ENCODE measurements at regions of chr3 and their contacts with region 1.

Region 1: DNA sequence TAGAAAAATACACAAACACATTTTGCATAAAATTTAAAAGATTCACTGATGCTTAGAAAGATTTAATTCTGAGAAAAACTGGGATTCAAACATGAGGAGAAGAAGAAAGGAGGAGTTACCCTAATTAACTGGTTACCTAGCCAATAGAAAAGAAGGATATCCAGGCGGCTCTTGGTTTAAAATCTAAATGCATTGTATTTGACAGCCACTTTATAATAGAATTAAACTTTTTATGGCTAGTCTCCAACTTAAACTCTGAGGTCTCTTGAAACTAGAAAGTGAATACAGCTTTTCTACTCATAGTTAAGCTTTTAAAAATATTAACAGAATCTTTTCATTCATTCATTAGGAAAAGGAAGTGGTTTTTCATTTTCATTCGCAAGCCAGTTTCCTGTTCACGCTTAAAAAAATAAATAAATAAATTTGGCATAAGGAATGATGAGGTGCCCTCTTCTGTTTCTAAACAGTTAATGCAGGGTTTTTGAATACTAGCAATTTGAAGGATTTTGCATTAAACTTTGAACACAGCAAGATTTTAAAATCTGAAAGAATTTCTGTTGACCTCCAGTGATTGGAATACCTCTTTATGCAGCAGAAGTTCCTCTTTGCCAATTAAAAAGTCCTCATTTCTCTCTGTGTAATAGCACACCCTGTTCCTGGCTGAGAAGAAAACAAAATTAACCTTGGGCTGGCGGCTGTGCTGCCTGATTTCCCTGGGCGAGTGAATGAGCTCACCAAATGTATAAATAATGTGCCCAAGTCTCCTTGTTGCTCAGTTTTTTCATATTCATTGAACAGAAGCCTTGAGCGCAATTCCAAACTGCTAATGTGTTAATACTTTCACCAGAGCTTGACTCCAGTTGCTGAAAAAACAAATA is 105.1 kb downstream of the ZMAT3 start:
- DNase-seq: no peak
- ATAC-seq: no peak
- H3K4me3 ChIP-seq: no peak overlapping the region
- H3K4me1 ChIP-seq: peaks cover 6% of the 10 kb centered on the region
- CTCF ChIP-seq: no peak

Region 2: GRCh38 chr3:178436773-178437172 is 529.8 kb before region 1 on chr3:
- intact Hi-C with region 1: loop called (anchors 10 kb)
- DNase-seq: no peak
- ATAC-seq: no peak
- H3K4me3 ChIP-seq: no peak overlapping the region
- H3K4me1 ChIP-seq: no peaks in the 10 kb centered on the region
- CTCF ChIP-seq: no peak

Region 3: DNA sequence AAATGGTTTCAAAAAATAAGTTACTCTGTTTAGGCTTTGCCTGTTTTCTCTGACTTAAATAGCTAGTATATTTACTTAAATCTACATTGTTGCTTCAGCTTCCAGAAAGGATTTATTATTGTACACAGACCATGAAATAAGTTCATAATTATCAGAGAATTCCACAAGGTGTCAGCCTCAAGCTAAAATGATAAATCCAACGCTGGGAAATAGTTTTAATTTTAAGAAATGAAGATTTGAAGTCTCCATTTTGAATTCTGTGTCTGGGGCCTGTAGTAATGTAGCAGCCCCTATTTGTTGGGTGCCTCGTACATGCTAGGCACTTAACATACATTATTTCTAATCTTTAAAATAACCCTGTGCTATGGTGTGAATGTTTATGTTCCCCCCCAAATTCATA is 522.9 kb before region 1 on chr3:
- intact Hi-C with region 1: loop called (anchors 10 kb)
- DNase-seq: no peak
- ATAC-seq: no peak
- H3K4me3 ChIP-seq: no peak overlapping the region
- H3K4me1 ChIP-seq: no peaks in the 10 kb centered on the region
- CTCF ChIP-seq: no peak

Region 4: DNA sequence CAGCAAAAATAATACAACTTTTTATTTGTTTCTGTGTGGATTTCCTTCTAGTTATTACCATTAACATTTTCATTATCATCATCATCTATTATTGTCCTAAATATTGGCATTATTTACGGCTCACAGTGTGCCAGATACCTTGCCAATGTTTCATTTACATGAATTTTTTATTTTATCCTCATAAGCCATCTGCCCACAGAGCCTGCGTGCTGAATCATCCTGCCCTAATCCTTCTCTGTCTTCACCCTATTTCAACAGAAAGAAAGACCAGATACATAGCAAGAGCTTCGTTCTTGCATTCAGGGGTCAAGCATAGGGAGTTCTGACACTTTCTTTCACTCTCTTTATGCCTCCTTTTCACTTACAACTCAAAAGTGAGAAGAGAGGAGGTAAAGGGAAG is 348.3 kb before region 1 on chr3:
- intact Hi-C with region 1: no loop called
- DNase-seq: no peak
- ATAC-seq: no peak
- H3K4me3 ChIP-seq: no peak overlapping the region
- H3K4me1 ChIP-seq: no peaks in the 10 kb centered on the region
- CTCF ChIP-seq: no peak

Region 5: GRCh38 chr3:178768072-178768864 is 198.3 kb before region 1 on chr3:
- intact Hi-C with region 1: no loop called
- DNase-seq: no peak
- ATAC-seq: no peak
- H3K4me3 ChIP-seq: no peak overlapping the region
- H3K4me1 ChIP-seq: no peaks in the 10 kb centered on the region
- CTCF ChIP-seq: no peak

Region 6: DNA sequence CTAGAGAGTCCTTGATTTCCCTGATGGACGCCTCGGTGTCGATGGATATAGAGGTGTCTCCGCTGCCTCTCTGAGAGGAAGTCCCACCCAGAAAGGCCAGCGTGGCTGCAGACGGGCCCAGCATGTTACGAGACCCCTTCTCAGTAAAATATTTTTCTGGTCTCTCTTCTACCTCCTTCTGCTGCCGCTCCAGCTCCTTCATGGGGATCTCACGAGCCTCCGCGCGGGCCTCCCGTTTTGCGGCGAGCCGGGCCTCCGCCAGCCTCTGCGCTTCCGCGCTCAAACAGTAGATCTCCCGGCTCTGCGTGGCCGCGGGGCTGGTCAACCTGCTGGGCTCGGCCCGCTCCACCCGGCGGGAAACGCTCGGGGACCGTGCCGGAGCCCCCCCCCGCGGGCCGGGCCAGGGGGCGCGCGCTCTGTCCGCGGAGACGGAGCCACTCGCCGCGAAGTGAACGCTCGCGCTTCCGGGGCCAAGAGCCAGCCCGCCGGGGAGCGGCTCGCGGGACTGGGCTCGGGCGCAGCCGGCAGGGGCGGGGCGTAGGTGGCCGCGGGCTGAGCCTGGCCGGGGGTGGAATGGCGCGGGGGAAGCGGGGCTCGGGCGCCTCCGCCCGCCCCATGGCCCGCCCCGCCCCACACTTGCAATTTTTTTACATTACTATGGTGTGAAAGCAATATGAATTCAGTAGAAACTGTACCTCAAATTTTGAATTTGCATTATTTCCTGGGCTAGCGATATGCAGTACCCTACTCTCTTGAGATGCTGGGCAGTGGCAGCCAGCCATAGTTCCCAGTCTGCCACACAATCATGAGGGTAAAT is 294.6 kb after region 1 on chr3:
- intact Hi-C with region 1: no loop called
- DNase-seq: peak; percentile 75 to 87 (median 83)
- ATAC-seq: peak; percentile 100
- H3K4me3 ChIP-seq: peak overlapping the region; percentile 30
- H3K4me1 ChIP-seq: peaks cover 3% of the 10 kb centered on the region
- CTCF ChIP-seq: no peak

Measured in mucosa of descending colon (tissue), 3 donors.